WTC11 (cell line): ENCODE measurements at regions of chr10 and their contacts with region 1.

Region 1: GRCh38 chr10:89217057-89217990 is 10.2 kb upstream of the CH25H start:
- DNase-seq: peak; percentile 53
- ATAC-seq: no peak
- H3K4me3 Mint-ChIP-seq: no peak overlapping the region
- H3K27ac Mint-ChIP-seq: no peak overlapping the region
- H3K4me1 Mint-ChIP-seq: peaks cover 17% of the 10 kb centered on the region
- H3K27me3 Mint-ChIP-seq: no peaks in the 10 kb centered on the region
- CTCF ChIP-seq: peak; percentile 67

Region 2: DNA sequence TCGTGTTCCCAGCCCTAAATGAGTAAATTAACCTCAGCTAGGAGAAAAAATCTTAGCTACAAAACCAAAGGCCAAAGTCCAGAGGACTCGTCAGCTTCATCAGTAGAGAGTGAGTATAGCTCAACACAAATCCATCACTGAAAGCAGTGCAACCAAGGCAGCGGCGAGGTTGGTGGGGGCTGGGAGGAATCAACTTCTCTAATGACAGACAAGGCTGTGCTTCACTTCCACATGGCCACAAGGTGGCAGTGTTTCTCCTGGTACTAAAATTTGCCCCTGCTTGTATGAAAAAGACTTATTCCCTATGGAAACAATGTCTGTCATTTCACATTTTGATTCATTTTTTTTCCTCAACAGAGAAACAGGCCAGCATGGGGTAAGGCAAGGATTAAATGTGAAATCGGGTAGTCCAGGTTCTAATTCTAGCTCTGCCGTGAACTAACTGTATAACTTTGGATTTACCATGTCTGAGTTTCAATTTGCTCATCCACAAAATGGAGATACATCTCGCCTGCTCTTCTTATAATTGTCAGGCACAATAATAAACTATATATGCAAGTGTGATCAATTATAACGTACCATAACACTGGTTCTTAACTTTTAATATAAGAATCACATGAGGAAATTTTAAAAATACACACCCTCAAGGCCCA is 187.4 kb before region 1 on chr10:
- CTCF ChIA-PET with region 1: interaction called, 21 read pairs
- POLR2A ChIA-PET with region 1: no interaction called
- DNase-seq: peak; percentile 67
- ATAC-seq: peak; percentile 85
- H3K4me3 Mint-ChIP-seq: no peak overlapping the region
- H3K27ac Mint-ChIP-seq: no peak overlapping the region
- H3K4me1 Mint-ChIP-seq: peaks cover 20% of the 10 kb centered on the region
- H3K27me3 Mint-ChIP-seq: no peaks in the 10 kb centered on the region
- CTCF ChIP-seq: peak; percentile 79

Region 3: DNA sequence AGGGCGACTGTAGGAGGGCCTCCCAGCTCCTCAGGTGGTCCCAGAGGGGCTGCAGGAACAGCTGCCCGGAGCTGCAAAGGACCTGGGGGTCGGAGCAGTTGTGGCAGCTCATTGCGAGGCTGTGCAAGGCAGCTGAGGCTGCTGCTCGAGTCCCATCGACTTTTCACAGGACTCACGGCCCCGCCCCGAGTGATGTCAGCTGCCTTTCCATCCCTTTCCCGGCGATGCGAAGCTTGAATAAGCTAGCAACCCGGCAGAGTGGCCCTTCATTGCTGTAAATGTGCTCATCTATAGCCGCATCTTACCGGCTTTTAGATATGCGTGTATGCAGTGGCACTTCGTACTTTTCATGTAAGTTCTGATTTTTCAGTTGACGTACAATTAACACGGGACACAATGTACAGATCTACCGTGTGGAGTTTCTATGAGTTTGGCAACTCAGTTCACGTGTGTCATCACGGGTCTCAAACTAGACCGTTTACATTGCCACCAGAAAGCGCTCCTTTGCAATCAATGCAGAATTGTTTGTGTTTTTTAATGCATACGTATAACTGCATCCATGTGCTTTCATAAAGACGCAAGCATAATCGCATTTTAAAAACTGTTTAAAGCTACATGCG is 10.0 kb before region 1 on chr10 and contains the start of gene CH25H:
- CTCF ChIA-PET with region 1: interaction called, 28 read pairs
- POLR2A ChIA-PET with region 1: no interaction called
- DNase-seq: peak; percentile 62
- ATAC-seq: peak; percentile 66
- H3K4me3 Mint-ChIP-seq: peak within 1 kb of the TSS; percentile 74
- H3K27ac Mint-ChIP-seq: no peak within 1 kb of the TSS
- H3K4me1 Mint-ChIP-seq: peaks cover 20% of the 10 kb centered on the region
- H3K27me3 Mint-ChIP-seq: peaks cover 4% of the 10 kb centered on the region; the same call in 1 of the 2 replicates
- CTCF ChIP-seq: no peak
- total RNA-seq, gene CH25H: 0.11 to 0.14 TPM in 2 of 3 replicates, not detected in the other

Region 4: GRCh38 chr10:89241486-89242344 is 24.4 kb after region 1 on chr10:
- CTCF ChIA-PET with region 1: interaction called, 11 read pairs
- POLR2A ChIA-PET with region 1: no interaction called
- DNase-seq: no peak
- ATAC-seq: no peak; the same call in 1 of the 2 replicates
- H3K4me3 Mint-ChIP-seq: no peak overlapping the region
- H3K27ac Mint-ChIP-seq: peak overlapping the region; percentile 76
- H3K4me1 Mint-ChIP-seq: peaks cover 56% of the 10 kb centered on the region
- H3K27me3 Mint-ChIP-seq: no peaks in the 10 kb centered on the region
- CTCF ChIP-seq: no peak

Region 5: DNA sequence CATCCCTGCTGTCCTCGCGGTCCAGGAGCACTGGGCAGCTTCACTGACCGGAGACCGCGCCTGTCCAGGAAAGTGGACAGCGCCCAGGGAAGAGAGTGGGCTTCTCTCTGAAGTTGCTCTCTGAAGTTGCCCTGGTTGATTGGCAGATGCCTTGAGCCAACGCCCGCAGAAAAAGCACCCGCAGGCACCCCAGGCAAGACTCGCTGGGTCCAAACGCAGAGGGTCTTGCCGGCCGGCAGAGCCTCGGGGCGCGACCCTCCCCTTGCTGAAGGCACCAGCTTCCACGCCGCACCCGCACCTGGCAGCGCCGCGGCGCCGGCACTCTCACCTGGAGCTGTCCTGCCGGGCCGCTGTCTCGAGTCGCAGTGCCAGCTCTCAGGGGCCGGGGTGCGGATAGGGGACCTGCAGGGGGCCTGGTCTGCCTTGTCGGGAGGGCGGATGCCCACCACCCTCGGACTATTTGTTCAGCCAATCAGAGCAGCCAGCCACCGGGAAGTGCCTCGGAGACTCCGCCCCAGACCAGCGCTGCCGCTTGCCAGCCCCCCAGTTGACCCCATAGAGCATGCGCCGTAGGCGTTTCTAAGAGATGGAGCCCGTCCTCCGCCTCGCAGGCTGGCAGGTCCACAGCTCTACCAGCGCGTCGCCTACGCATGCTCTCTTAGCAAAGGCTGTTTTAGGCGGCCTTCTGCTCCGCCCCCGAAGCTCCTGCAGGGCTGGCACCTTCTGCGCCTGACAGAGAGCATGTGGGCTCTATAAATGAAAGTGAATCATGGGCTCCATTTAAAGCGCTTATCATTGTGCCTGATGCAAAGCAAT is 34.3 kb after region 1 on chr10 and contains the start of gene LIPA:
- CTCF ChIA-PET with region 1: interaction called, 15 read pairs
- POLR2A ChIA-PET with region 1: no interaction called
- DNase-seq: peak; percentile 96
- ATAC-seq: peak; percentile 99
- H3K4me3 Mint-ChIP-seq: peak within 1 kb of the TSS; percentile 79
- H3K27ac Mint-ChIP-seq: no peak within 1 kb of the TSS
- H3K4me1 Mint-ChIP-seq: peaks cover 8% of the 10 kb centered on the region
- H3K27me3 Mint-ChIP-seq: peaks cover 9% of the 10 kb centered on the region; the same call in 1 of the 2 replicates
- CTCF ChIP-seq: no peak
- total RNA-seq, gene LIPA: 32.9 to 47.3 TPM (median 37.8 TPM) in 3 replicates